ENCODE measurements at regions of chr21 and their contacts with region 1.

Region 1: DNA sequence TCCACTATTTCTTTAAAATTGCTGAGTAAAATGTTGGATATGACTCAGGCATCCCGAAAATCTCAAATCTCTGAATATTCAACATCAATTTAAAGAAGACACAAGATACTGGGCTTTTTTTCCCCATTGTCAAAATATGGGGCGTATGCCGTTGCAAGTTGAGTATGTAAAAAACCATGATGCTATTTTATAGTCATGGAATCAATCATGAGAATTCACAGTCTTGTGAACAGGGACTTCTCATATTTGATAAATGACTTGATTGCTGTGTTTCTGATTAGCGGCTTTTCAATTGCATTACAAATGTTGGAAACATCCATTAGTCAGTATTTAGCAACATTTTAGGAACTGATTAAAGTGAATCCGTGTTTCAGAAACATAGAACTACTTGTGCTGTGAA is 45.3 kb downstream of the SETD4 start:
- DNase-seq: no peak
- ATAC-seq: no peak
- H3K4me3 Mint-ChIP-seq: no peak overlapping the region
- H3K27ac Mint-ChIP-seq: no peak overlapping the region
- H3K4me1 Mint-ChIP-seq: no peaks in the 10 kb centered on the region
- H3K27me3 Mint-ChIP-seq: peaks cover 6% of the 10 kb centered on the region
- CTCF ChIP-seq: no peak

Region 2: DNA sequence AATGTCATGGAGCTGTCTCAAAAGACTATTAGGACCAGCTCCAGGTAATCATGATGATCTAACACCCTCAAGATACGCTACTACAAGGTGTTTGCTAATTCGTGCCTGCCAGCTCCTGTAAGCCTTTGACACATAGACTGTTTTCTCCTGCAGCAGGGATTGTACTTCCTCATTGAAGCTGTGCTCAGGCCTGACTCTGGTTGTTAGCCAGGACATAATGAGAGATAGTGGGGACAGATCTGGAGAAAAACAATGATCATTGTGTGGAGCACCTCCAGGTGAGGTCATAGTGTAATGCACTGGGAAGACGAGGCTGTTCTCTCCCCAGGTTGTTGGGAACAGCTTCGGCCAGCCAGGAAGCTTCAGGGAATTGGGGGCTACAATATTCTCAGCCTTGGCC is 49.3 kb before region 1 on chr21:
- CTCF ChIA-PET with region 1: no interaction called
- POLR2A ChIA-PET with region 1: no interaction called
- intact Hi-C with region 1: loop called (anchors 5 kb)
- DNase-seq: no peak
- ATAC-seq: no peak
- H3K4me3 Mint-ChIP-seq: no peak overlapping the region
- H3K27ac Mint-ChIP-seq: no peak overlapping the region
- H3K4me1 Mint-ChIP-seq: no peaks in the 10 kb centered on the region
- H3K27me3 Mint-ChIP-seq: peaks cover 6% of the 10 kb centered on the region
- CTCF ChIP-seq: no peak

Region 3: GRCh38 chr21:36060159-36060921 is 45.3 kb after region 1 on chr21 and contains the start of gene SETD4:
- CTCF ChIA-PET with region 1: no interaction called
- POLR2A ChIA-PET with region 1: no interaction called
- intact Hi-C with region 1: no loop called
- DNase-seq: peak; percentile 94
- ATAC-seq: peak; percentile 93
- H3K4me3 Mint-ChIP-seq: peak within 1 kb of the TSS; percentile 83
- H3K27ac Mint-ChIP-seq: peak within 1 kb of the TSS; percentile 93
- H3K4me1 Mint-ChIP-seq: peaks cover 27% of the 10 kb centered on the region
- H3K27me3 Mint-ChIP-seq: no peaks in the 10 kb centered on the region
- CTCF ChIP-seq: no peak
- total RNA-seq, gene SETD4: 18.5 to 19.1 TPM

Region 4: DNA sequence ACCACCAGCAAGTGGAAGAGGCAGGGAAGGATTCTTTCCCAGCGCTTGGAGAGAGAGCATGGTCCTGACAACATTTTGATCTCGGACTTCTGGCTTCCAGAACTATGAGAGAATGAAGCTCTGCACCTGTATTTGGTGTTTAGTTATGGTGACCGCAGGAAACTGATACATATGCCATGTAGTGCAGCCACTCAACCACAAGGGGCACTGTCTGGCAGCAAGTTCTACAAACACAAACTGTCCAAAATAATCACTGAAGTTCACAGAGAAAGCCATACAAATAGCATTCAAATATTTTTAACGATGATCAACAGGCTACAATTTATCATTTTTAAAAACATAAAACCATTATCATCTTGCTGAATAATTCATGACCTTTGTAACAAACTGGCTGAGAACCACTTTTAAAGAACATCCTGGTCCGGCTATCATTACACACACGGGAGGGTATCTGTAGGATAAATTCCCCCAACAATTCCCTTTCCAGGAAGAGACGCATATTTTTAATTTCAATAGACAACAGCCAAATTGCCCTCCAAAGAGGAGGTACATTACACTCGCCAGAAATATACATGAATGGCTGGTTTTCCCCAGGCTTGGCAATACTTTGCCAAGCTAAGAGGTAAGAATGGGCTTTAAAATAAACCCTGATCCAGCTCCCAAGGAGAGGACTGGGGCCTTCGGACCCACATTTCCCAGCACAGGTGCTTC is 110.6 kb after region 1 on chr21:
- CTCF ChIA-PET with region 1: no interaction called
- POLR2A ChIA-PET with region 1: no interaction called
- intact Hi-C with region 1: no loop called
- DNase-seq: peak; percentile 79
- ATAC-seq: peak; percentile 71
- H3K4me3 Mint-ChIP-seq: no peak overlapping the region
- H3K27ac Mint-ChIP-seq: no peak overlapping the region
- H3K4me1 Mint-ChIP-seq: peaks cover 19% of the 10 kb centered on the region
- H3K27me3 Mint-ChIP-seq: no peaks in the 10 kb centered on the region
- CTCF ChIP-seq: peak; percentile 89